ENCODE measurements at regions of chr16 and their contacts with region 1.

Region 1: GRCh38 chr16:67115639-67116038 is 5.9 kb downstream of the PHAF1 start:
- DNase-seq: no peak
- ATAC-seq: no peak
- H3K4me3 ChIP-seq: no peak overlapping the region; a peak in 1 of 6 replicates
- H3K27ac ChIP-seq: peak overlapping the region; percentile 87
- H3K4me1 ChIP-seq: peaks cover 72% of the 10 kb centered on the region
- H3K27me3 ChIP-seq: no peaks in the 10 kb centered on the region; a peak in 1 of 5 replicates
- CTCF ChIP-seq: no peak
- EP300 ChIP-seq: no peak
- POLR2A ChIP-seq: no peak
- RAD21 ChIP-seq: no peak

Region 2: GRCh38 chr16:67129422-67129821 is 13.8 kb after region 1 on chr16:
- CTCF ChIA-PET with region 1: no interaction called
- POLR2A ChIA-PET with region 1: interaction called, 16 read pairs
- in situ Hi-C with region 1: no loop called
- intact Hi-C with region 1: no loop called
- DNase-seq: no peak
- ATAC-seq: peak; percentile 22; the same call in 2 of the 3 replicates
- H3K4me3 ChIP-seq: no peak overlapping the region
- H3K27ac ChIP-seq: no peak overlapping the region
- H3K4me1 ChIP-seq: no peaks in the 10 kb centered on the region; the same call in 1 of the 2 replicates
- H3K27me3 ChIP-seq: no peaks in the 10 kb centered on the region
- CTCF ChIP-seq: no peak
- EP300 ChIP-seq: no peak
- POLR2A ChIP-seq: no peak
- RAD21 ChIP-seq: no peak

Region 3: DNA sequence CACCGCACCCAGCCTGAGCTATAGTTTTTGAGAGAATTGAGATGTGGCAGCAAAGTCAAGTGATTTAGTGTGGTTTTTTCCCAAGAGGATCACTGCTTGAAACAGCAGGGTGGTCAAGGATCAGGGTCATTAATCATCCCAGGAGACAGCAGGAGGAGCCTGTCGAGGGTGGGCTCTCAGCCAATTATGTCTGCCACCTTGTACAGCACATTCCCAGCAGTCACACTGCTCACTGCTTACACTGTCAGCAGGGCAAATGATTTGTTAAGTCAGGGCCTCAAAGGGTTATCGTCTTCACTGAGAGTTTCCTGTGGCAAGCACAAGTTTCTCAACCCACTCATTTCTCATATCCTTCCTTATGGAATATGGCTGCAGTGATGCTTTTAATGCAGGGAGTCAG is 22.0 kb after region 1 on chr16:
- CTCF ChIA-PET with region 1: no interaction called
- POLR2A ChIA-PET with region 1: interaction called, 14 read pairs
- in situ Hi-C with region 1: no loop called
- intact Hi-C with region 1: no loop called
- DNase-seq: no peak
- ATAC-seq: no peak
- H3K4me3 ChIP-seq: no peak overlapping the region
- H3K27ac ChIP-seq: no peak overlapping the region
- H3K4me1 ChIP-seq: no peaks in the 10 kb centered on the region
- H3K27me3 ChIP-seq: no peaks in the 10 kb centered on the region
- CTCF ChIP-seq: no peak
- EP300 ChIP-seq: no peak
- POLR2A ChIP-seq: no peak
- RAD21 ChIP-seq: no peak

Region 4: GRCh38 chr16:67372664-67373063 is 257.0 kb after region 1 on chr16:
- CTCF ChIA-PET with region 1: no interaction called
- POLR2A ChIA-PET with region 1: no interaction called
- in situ Hi-C with region 1: no loop called
- intact Hi-C with region 1: no loop called
- DNase-seq: no peak
- ATAC-seq: no peak
- H3K4me3 ChIP-seq: no peak overlapping the region
- H3K27ac ChIP-seq: no peak overlapping the region
- H3K4me1 ChIP-seq: peaks cover 33% of the 10 kb centered on the region
- H3K27me3 ChIP-seq: peaks cover 1 to 8% of the 10 kb centered on the region in 2 experiments; a peak in 1 of 5 replicates
- CTCF ChIP-seq: peak; percentile 32
- EP300 ChIP-seq: no peak
- POLR2A ChIP-seq: no peak
- RAD21 ChIP-seq: no peak; the same call in 1 of the 2 replicates

Measured in HepG2 (cell line).